ENCODE measurements at regions of chr1 and their contacts with region 1.

Region 1: DNA sequence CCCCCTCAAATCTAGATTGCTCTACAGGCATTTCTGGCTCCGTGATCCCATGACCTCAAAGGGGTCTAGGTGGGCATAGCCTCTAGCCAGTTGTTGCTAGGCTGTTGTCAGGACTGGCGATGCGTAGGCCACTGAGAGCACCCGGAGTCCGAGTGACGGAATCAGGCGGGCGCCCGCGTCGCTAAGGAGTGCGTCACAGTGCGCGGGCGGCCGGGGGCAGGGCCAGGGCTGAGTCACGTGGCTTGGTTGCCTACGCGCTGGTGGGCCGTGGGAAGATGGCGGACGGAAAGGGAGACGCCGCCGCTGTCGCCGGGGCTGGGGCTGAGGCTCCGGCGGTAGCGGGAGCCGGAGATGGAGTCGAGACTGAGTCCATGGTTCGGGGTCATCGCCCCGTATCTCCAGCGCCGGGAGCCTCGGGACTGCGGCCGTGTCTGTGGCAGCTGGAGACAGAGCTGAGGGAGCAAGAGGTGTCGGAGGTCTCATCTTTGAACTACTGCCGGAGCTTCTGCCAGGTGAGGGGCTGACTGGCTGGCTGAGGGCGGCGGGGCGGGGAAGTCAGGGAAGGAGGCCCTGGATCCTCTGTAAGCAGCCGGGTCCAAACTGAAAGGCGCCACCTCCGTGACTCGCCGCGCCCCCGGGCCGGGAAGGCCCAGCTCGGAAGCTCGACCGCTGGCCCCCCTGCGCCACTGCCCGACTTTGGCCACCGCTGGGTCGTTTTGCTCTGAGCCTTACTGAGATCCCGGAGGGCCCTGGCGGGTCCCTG is at the start of gene RLF:
- DNase-seq: peak; percentile 90 to 97 (median 94)
- ATAC-seq: peak; percentile 95
- H3K4me3 ChIP-seq: peak within 1 kb of the TSS; percentile 96 to 100
- H3K4me3 Mint-ChIP-seq: no peak within 1 kb of the TSS
- H3K27ac ChIP-seq: peak within 1 kb of the TSS; percentile 96 to 98
- H3K27ac Mint-ChIP-seq: no peak within 1 kb of the TSS
- H3K4me1 ChIP-seq: peaks cover 46% of the 10 kb centered on the region
- H3K4me1 Mint-ChIP-seq: peaks cover 22% of the 10 kb centered on the region
- H3K27me3 ChIP-seq: no peaks in the 10 kb centered on the region
- H3K27me3 Mint-ChIP-seq: no peaks in the 10 kb centered on the region
- CTCF ChIP-seq: no peak
- total RNA-seq, gene RLF: 62.2 to 62.6 TPM

Region 2: GRCh38 chr1:40049725-40050124 is 111.6 kb before region 1 on chr1:
- CTCF ChIA-PET with region 1: no interaction called
- POLR2A ChIA-PET with region 1: no interaction called
- intact Hi-C with region 1: no loop called
- DNase-seq: peak in 1 of 9 experiments; percentile 42
- ATAC-seq: peak; percentile 15
- H3K4me3 ChIP-seq: no peak overlapping the region
- H3K4me3 Mint-ChIP-seq: peak overlapping the region; percentile 71
- H3K27ac ChIP-seq: peak overlapping the region in 1 of 2 experiments; percentile 24
- H3K27ac Mint-ChIP-seq: peak overlapping the region; percentile 92
- H3K4me1 ChIP-seq: peaks cover 85% of the 10 kb centered on the region
- H3K4me1 Mint-ChIP-seq: peaks cover 84% of the 10 kb centered on the region
- H3K27me3 ChIP-seq: no peaks in the 10 kb centered on the region
- H3K27me3 Mint-ChIP-seq: no peaks in the 10 kb centered on the region
- CTCF ChIP-seq: no peak

Region 3: GRCh38 chr1:40178200-40178599 is 16.9 kb after region 1 on chr1:
- CTCF ChIA-PET with region 1: no interaction called
- POLR2A ChIA-PET with region 1: interaction called, 3 read pairs
- intact Hi-C with region 1: loop called in 1 of 2 experiments (anchors 2 kb)
- DNase-seq: no peak
- ATAC-seq: peak; percentile 26
- H3K4me3 ChIP-seq: no peak overlapping the region
- H3K4me3 Mint-ChIP-seq: peak overlapping the region; percentile 6
- H3K27ac ChIP-seq: no peak overlapping the region
- H3K27ac Mint-ChIP-seq: no peak overlapping the region
- H3K4me1 ChIP-seq: peaks cover 37% of the 10 kb centered on the region
- H3K4me1 Mint-ChIP-seq: peaks cover 63% of the 10 kb centered on the region
- H3K27me3 ChIP-seq: no peaks in the 10 kb centered on the region
- H3K27me3 Mint-ChIP-seq: no peaks in the 10 kb centered on the region
- CTCF ChIP-seq: no peak

Region 4: GRCh38 chr1:40257688-40258444 is 96.6 kb after region 1 on chr1 and contains the start of gene ZMPSTE24:
- CTCF ChIA-PET with region 1: no interaction called
- POLR2A ChIA-PET with region 1: interaction called, 4 read pairs
- intact Hi-C with region 1: loop called (anchors 1 kb)
- DNase-seq: peak; percentile 92 to 99 (median 95)
- ATAC-seq: peak; percentile 95
- H3K4me3 ChIP-seq: peak within 1 kb of the TSS; percentile 95 to 98
- H3K4me3 Mint-ChIP-seq: peak within 1 kb of the TSS; percentile 98
- H3K27ac ChIP-seq: peak within 1 kb of the TSS; percentile 88 to 99
- H3K27ac Mint-ChIP-seq: peak within 1 kb of the TSS; percentile 100
- H3K4me1 ChIP-seq: peaks cover 20% of the 10 kb centered on the region
- H3K4me1 Mint-ChIP-seq: peaks cover 56% of the 10 kb centered on the region
- H3K27me3 ChIP-seq: no peaks in the 10 kb centered on the region
- H3K27me3 Mint-ChIP-seq: no peaks in the 10 kb centered on the region
- CTCF ChIP-seq: no peak
- total RNA-seq, gene ZMPSTE24: 11.5 to 12.2 TPM

Measured in CD8-positive, alpha-beta T cell (primary cell).